Heart right ventricle (tissue), 16 donors: ENCODE measurements at regions of chr3 and their contacts with region 1.

Region 1: GRCh38 chr3:130048726-130049125 is 32.9 kb upstream of the ALG1L2 start:
- DNase-seq: no peak
- ATAC-seq: no peak
- H3K4me3 ChIP-seq: no peak overlapping the region
- H3K27ac ChIP-seq: no peak overlapping the region
- H3K4me1 ChIP-seq: no peaks in the 10 kb centered on the region
- H3K27me3 ChIP-seq: no peaks in the 10 kb centered on the region
- CTCF ChIP-seq: no peak

Region 2: DNA sequence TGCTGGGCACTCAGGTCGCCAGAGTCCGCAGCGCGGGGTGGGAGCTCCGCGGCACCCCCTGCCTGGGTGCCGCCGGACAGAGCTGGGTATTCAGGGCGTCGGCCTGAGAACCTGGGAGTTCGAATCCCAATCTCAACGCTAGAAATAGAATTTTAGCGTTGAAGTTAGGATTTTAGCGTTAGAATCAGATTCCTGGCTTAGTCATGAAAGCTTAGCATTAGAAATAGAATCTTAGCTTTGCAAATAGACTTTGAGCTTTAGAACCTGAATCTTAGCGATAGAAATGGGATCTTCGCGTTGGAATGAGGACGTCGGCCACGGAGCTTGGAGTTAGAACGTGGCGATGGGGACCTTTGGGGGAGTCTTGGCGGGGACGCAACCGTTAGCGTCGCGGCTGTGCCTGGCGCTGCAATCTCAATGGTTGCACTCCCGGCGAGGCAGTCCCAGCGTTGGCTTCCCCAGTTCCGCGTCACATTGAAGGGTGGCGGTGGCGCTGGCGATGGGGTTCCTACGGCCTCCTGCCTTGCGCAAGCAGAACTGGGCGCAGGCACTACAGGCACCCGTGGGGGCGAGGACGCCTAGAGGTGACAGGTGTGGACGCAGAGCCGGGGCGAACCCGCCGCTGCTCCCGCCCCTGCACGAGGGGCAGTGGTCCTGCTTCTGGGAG is 73.6 kb before region 1 on chr3:
- intact Hi-C with region 1: no loop called
- DNase-seq: peak in 1 of 2 donors; percentile 35
- ATAC-seq: peak in 5 of 8 donors; percentile 13 to 51 (median 30)
- H3K4me3 ChIP-seq: peak overlapping the region in 8 of 10 donors; percentile 14 to 35 (median 28)
- H3K27ac ChIP-seq: no peak overlapping the region
- H3K4me1 ChIP-seq: peaks cover 4 to 18% (median 15%) of the 10 kb centered on the region in 9 donors
- H3K27me3 ChIP-seq: peaks cover 9 to 67% (median 62%) of the 10 kb centered on the region in 7 donors
- CTCF ChIP-seq: no peak

Region 3: DNA sequence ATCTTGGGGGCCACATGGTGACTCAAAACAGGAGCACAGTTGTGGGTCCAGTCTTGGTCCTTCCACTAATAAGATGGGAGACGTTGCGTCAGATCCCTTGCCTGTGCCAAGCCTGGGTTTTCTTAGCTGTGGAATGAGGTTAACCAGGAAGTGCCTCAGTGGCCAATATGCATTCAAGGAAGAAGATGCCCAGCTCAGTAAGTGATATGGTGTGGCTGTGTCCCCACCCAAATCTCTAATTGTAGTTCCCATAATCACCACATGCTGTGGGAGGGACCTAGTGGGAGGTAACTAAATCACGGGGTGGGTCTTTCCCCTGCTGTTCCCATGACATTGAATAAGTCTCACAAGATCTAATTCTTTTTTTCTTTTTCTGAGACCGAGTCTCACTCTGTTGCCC is 39.3 kb after region 1 on chr3:
- intact Hi-C with region 1: loop called in 3 of 10 experiments (anchors 2 to 5 kb)
- DNase-seq: no peak
- ATAC-seq: no peak
- H3K4me3 ChIP-seq: no peak overlapping the region
- H3K27ac ChIP-seq: no peak overlapping the region
- H3K4me1 ChIP-seq: peaks cover 0 to under 1% (median 0%) of the 10 kb centered on the region in 9 donors
- H3K27me3 ChIP-seq: no peaks in the 10 kb centered on the region
- CTCF ChIP-seq: no peak

Region 4: DNA sequence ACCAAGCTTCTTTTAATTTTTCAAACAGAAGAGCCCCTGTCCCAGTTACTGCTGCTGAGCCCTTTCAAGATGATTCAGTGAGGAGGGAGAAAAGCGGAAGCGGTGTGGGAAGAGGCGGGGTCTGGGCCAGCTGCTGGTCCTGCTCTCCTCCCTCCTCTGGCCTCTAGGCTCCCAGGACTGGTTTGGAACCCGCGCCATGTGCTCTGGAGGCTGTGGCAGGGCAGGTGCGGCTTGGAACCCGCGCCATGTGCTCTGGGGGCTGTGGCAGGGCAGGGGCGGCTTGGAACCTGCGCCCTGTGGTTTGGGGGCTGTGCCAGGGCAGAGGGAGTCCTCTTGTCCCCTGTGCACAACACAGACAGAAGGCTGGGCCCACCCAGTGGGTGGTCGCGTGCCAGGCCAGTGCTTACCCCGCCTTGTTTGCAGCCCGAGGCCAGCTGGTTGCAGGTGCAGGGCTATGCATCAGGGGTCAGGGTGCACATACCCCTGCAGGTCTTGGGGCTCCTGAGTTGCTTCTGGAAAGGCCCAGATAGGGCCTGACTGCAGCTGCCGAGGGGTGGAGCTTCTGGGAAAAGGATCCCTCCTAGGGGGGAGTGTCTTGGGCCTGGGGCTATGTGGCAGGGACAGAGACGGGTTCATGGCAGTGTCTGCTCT is 45.1 kb after region 1 on chr3:
- intact Hi-C with region 1: loop called in 3 of 10 experiments (anchors 2 to 5 kb)
- DNase-seq: no peak
- ATAC-seq: no peak
- H3K4me3 ChIP-seq: peak overlapping the region in 1 of 10 donors; percentile 24
- H3K27ac ChIP-seq: peak overlapping the region in 1 of 10 donors; percentile 31
- H3K4me1 ChIP-seq: peaks cover 0 to 20% (median 0%) of the 10 kb centered on the region in 9 donors
- H3K27me3 ChIP-seq: no peaks in the 10 kb centered on the region
- CTCF ChIP-seq: no peak